GM10248 (cell line): ENCODE measurements at regions of chr5 and their contacts with region 1.

Region 1: GRCh38 chr5:133996683-133997252 is 8.0 kb downstream of the VDAC1 start:
- DNase-seq: no peak
- CTCF ChIP-seq: peak; percentile 61

Region 2: DNA sequence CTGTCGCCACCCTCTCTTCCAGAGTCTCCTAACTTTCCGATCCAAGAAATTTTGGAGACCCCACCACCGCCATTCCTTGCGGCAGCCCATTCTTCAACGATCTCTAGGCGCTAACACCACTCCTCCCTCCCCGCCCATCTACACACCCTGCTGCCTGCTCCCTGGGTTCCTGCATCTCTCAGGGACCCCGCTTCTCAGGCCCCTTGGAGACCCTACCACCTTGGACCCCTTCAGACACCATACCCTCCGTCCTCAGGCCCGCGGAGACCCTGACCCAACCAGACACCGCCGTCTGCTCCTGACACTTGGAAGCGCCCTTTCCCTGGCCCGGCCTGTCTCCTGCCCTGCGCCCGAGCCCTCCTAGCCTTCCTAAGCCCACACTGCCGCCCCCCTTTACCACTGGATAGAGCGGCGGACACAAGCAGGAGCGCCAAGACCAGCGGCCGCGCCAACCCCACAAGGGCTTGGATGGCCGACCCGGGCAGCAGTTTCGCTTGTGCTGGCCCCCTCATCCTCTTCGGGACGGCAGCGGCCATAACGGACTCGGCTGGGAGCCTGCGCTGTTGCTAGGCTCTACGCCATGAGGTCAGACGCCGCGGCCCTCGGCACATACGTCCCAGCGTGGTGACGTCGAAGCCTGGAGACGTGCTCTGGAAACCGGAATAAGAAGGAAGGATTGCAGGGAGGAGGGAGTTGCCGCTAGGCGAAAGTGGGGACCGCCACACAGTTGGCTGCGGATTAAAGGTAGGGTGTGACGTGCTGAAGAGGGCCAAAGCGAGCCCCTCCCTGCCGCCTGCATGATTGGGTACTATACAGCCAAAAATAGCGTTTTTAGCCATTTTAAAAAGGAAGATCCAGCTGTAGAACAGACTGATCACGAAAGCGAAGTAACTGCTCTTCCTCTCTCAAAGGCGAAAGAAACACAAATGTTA is 28.5 kb before region 1 on chr5 and contains the start of gene C5orf15:
- CTCF ChIA-PET with region 1: interaction called, 12 read pairs
- POLR2A ChIA-PET with region 1: no interaction called
- DNase-seq: peak; percentile 92
- CTCF ChIP-seq: no peak

Region 3: DNA sequence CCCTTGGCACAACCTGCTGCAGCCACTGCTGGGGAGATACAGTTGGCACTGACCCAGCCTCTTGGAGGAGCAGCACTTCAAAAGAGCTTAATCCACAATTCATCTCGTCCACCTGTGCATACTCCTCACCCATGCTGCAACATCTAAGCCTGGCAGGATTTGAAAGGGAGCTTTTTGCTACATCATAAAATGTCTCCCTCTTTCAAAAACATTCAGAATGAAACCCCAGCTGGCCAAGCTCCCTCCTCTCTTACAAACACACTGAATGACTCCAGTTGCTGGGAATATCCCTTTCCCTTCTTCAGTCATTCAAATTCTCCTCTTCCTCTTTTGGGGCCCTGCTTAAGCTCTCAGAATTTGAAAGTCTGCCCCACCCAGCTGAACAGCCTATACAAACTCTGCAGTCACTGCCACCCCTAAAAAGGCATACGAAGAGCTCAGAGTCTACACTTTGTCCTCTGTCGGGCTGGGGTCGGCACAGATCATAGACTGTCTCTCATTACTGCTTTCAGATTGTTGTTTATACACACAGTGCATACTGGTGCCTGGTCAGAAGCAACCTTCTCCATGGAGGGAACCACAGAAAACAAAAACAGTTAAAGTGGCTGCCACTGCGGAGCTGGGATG is 19.5 kb before region 1 on chr5:
- CTCF ChIA-PET with region 1: interaction called, 36 read pairs
- POLR2A ChIA-PET with region 1: interaction called, 3 read pairs
- DNase-seq: peak; percentile 34
- CTCF ChIP-seq: no peak

Region 4: GRCh38 chr5:133985540-133986180 is 11.1 kb before region 1 on chr5:
- CTCF ChIA-PET with region 1: interaction called, 36 read pairs
- POLR2A ChIA-PET with region 1: interaction called, 4 read pairs
- DNase-seq: no peak
- CTCF ChIP-seq: no peak

Region 5: DNA sequence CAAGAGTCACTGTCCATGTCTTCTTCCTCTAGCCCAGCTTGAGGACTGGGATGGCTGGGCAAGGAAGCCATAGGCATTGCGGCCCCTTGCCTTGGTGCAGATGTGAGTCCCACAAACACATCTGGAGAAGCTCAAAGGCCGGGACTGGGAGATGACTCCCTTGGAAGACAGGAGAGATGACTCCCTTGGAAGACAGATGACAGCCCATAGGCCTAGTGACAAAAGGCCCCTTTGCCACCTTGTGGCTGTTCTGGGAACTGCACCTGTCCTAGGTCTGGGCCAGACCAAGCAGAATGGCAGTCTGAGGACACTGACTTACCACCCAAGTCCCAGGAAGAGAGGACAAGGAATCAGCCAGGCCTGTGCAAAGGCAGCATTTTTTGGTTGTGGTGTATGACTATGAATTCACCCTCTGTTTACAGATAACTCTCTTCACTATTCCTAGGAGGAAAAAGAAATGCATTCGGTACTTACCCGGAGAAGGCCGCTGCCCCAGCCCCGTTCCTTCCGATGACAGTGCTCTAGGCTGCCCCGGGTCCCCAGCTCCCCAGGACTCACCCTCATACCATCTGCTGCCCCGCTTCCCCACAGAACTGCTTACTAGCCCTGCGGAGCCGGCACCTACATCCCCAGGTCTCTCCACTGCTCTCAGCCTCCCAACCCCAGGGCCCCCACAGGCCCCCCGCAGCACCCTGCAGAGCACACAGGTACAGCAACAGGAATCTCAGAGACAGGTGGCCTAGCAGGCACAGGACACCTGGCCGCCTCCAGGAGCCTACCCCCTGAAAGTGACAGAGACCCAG is 149.2 kb after region 1 on chr5:
- CTCF ChIA-PET with region 1: interaction called, 3 read pairs
- POLR2A ChIA-PET with region 1: interaction called, 14 read pairs
- DNase-seq: peak; percentile 79
- CTCF ChIP-seq: peak; percentile 98